MCF 10A (cell line): ENCODE measurements at regions of chr2 and their contacts with region 1.

Region 1: DNA sequence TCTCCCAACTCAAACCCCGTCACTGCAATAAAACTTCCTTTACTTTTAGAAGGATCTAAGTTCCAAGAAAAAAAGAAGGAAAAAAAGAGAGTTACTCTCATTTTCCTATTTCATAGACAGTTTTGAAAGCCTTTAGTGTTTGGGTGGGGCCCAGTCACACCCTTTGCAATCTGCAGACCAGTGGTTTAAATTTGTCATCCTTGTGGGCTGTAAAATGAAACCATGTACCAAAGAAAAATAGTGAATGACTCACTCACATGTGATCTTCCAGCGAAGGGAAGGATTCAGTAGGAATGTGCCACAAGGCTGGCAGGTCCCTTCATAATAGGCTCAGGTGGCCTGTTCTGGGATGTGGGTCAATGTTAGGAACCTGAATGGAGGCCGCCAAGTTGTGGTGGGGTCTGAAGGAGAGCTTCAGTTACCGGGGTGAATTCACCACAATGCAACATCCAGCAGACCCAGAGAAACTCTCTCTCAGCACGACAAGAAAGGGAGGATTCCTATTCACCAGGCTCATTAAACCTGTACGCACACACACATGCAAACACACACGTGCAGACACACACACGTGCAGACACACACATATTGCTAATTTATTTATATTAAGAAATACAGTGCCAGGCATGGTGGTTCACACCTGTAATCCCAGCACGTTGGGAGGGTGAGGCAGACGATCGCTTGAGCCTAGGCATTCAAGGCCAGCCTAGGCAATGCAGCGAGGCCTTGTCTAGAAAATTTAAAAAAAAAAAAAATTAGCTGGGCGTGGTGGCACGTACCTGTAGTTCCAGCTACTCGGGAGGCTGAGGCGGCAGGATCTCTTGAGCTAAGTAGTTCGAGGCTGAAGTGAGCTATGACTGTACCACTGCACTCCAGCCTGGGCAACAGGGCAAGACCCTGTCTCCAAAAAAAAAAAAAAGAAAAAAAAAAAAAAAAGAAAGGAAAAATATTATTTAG is 28.5 kb downstream of the ANXA4 start:
- DNase-seq: peak; percentile 87
- H3K4me3 Mint-ChIP-seq: peak overlapping the region; percentile 57
- H3K27ac Mint-ChIP-seq: peak overlapping the region; percentile 92
- H3K4me1 Mint-ChIP-seq: peaks cover 37% of the 10 kb centered on the region
- H3K27me3 Mint-ChIP-seq: no peaks in the 10 kb centered on the region
- CTCF ChIP-seq: no peak

Region 2: DNA sequence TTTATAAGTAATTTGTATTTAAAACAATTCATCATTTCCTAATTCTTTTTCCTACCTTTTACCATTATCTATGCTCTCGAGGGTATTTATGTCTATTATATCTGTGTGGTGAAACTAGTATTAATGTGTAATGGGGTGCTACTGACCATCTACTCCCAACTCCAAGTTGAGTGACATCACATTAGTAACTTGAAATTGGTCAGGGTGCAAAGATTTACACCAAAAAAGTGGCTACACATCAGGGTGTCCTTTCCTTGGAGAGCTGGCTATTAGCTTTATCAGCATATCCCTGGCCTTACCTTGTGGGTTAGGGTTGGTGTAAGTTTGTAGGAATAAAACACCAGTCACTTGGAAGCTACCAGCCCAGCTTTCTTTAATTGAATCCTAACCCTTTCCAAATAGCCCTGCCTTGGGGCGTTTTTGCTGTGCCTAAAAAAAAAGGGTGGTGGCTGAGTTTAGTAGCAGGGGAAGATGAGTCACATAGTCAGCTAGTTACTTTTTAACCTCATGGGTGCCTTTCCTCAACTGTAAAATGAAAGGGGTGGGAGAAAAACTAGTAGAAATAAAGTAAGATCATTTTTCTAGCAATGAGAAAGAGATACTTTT is 14.5 kb before region 1 on chr2:
- CTCF ChIA-PET with region 1: interaction called, 6 read pairs
- POLR2A ChIA-PET with region 1: interaction called, 27 read pairs
- intact Hi-C with region 1: no loop called
- DNase-seq: peak; percentile 94
- H3K4me3 Mint-ChIP-seq: peak overlapping the region; percentile 17
- H3K27ac Mint-ChIP-seq: peak overlapping the region; percentile 41
- H3K4me1 Mint-ChIP-seq: peaks cover 28% of the 10 kb centered on the region
- H3K27me3 Mint-ChIP-seq: no peaks in the 10 kb centered on the region
- CTCF ChIP-seq: no peak

Region 3: GRCh38 chr2:69781321-69782248 is 11.1 kb after region 1 on chr2:
- CTCF ChIA-PET with region 1: no interaction called
- POLR2A ChIA-PET with region 1: interaction called, 13 read pairs
- intact Hi-C with region 1: no loop called
- DNase-seq: peak; percentile 57
- H3K4me3 Mint-ChIP-seq: no peak overlapping the region
- H3K27ac Mint-ChIP-seq: peak overlapping the region; percentile 10
- H3K4me1 Mint-ChIP-seq: peaks cover 27% of the 10 kb centered on the region
- H3K27me3 Mint-ChIP-seq: no peaks in the 10 kb centered on the region
- CTCF ChIP-seq: no peak